Activated B cell treated with CpG ODN at 0.5 μM for 24 hours (primary cell): ENCODE measurements at regions of chr11 and their contacts with region 1.

Region 1: GRCh38 chr11:69296890-69297786 is 3.2 kb downstream of the MYEOV start:
- DNase-seq: peak; percentile 82
- ATAC-seq: peak; percentile 42
- H3K4me3 Mint-ChIP-seq: peak overlapping the region; percentile 70
- H3K27ac Mint-ChIP-seq: peak overlapping the region; percentile 96
- H3K4me1 Mint-ChIP-seq: peaks cover 79% of the 10 kb centered on the region
- H3K27me3 Mint-ChIP-seq: no peaks in the 10 kb centered on the region
- CTCF ChIP-seq: no peak

Region 2: GRCh38 chr11:69055598-69056516 is 241.3 kb before region 1 on chr11:
- CTCF ChIA-PET with region 1: no interaction called
- POLR2A ChIA-PET with region 1: interaction called, 15 read pairs
- intact Hi-C with region 1: loop called (anchors 1 kb)
- DNase-seq: peak; percentile 78
- ATAC-seq: peak; percentile 87
- H3K4me3 Mint-ChIP-seq: peak overlapping the region; percentile 69
- H3K27ac Mint-ChIP-seq: peak overlapping the region; percentile 86
- H3K4me1 Mint-ChIP-seq: peaks cover 58% of the 10 kb centered on the region
- H3K27me3 Mint-ChIP-seq: no peaks in the 10 kb centered on the region
- CTCF ChIP-seq: no peak

Region 3: GRCh38 chr11:69134943-69135342 is 162.2 kb before region 1 on chr11:
- CTCF ChIA-PET with region 1: no interaction called
- POLR2A ChIA-PET with region 1: interaction called, 10 read pairs
- intact Hi-C with region 1: no loop called
- DNase-seq: no peak
- ATAC-seq: no peak
- H3K4me3 Mint-ChIP-seq: no peak overlapping the region
- H3K27ac Mint-ChIP-seq: no peak overlapping the region
- H3K4me1 Mint-ChIP-seq: peaks cover 20% of the 10 kb centered on the region
- H3K27me3 Mint-ChIP-seq: no peaks in the 10 kb centered on the region
- CTCF ChIP-seq: no peak

Region 4: DNA sequence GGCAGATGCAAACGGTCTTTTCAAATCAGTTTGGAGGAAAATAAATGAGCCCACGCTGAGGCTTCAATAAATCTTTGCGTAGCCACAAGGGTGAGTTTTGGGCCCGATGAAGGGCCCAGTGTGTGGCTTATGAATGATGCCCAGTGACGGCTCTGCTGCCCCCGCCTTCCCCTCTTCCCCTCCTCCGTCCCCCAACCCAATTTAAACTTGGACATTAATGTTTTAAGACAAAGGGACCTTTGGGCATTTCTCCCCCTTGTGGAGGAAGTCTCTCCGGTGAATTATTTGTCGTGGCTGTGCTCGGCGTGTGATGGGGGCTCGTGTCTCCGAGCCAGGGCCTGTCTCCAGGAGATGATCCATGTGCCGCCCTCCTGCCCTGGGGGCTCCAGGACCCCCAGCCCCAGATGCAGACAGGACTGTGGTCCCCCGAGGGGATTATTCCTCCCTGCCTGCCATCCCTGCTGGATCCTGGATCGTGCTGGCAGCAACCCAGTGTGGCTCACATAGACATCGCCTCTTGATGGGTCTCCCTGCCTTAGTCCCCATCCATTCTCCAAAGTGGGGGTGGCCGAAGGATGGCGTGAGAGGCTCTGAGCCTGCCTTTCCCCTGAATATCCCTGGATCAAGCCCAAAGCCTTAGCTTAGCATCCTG is 85.1 kb before region 1 on chr11:
- CTCF ChIA-PET with region 1: no interaction called
- POLR2A ChIA-PET with region 1: no interaction called
- intact Hi-C with region 1: loop called (anchors 2 kb)
- DNase-seq: peak; percentile 10
- ATAC-seq: no peak
- H3K4me3 Mint-ChIP-seq: no peak overlapping the region
- H3K27ac Mint-ChIP-seq: peak overlapping the region; percentile 13
- H3K4me1 Mint-ChIP-seq: peaks cover 33% of the 10 kb centered on the region
- H3K27me3 Mint-ChIP-seq: peaks cover 7% of the 10 kb centered on the region
- CTCF ChIP-seq: no peak

Region 5: GRCh38 chr11:69337211-69337721 is 40.1 kb after region 1 on chr11:
- CTCF ChIA-PET with region 1: no interaction called
- POLR2A ChIA-PET with region 1: interaction called, 5 read pairs
- intact Hi-C with region 1: loop called (anchors 1 kb)
- DNase-seq: no peak
- ATAC-seq: peak; percentile 87
- H3K4me3 Mint-ChIP-seq: peak overlapping the region; percentile 12
- H3K27ac Mint-ChIP-seq: no peak overlapping the region
- H3K4me1 Mint-ChIP-seq: peaks cover 17% of the 10 kb centered on the region
- H3K27me3 Mint-ChIP-seq: no peaks in the 10 kb centered on the region
- CTCF ChIP-seq: no peak

Region 6: DNA sequence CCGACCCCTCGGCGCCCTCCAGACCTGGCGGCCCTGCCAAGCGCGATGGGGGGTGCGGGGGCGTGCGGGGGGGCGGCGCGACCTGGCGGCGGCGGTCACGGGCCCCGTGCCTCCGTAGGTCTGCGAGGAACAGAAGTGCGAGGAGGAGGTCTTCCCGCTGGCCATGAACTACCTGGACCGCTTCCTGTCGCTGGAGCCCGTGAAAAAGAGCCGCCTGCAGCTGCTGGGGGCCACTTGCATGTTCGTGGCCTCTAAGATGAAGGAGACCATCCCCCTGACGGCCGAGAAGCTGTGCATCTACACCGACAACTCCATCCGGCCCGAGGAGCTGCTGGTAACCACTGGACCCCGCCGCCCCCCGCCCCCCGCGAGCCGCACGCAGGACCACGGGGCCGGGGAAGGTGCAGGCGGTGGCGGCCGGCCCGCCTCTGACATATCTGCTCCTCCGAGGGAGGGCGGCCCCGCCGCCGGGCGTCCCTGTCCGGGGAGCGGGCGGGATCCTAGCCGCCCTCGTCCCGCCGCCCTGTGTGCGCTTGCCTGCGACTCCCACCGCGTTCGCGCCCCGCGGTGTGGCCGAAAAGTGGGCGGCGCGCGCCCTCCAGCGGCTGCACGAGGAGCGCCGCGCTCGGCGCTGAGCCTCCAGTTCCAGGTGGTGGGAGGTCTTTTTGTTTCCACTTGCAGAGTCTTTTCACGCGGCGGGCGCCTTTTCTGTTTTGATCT is 345.9 kb after region 1 on chr11:
- CTCF ChIA-PET with region 1: interaction called, 28 read pairs
- POLR2A ChIA-PET with region 1: interaction called, 27 read pairs
- intact Hi-C with region 1: loop called (anchors 1 kb)
- DNase-seq: peak; percentile 86
- ATAC-seq: peak; percentile 80
- H3K4me3 Mint-ChIP-seq: peak overlapping the region; percentile 83
- H3K27ac Mint-ChIP-seq: no peak overlapping the region
- H3K4me1 Mint-ChIP-seq: peaks cover 32% of the 10 kb centered on the region
- H3K27me3 Mint-ChIP-seq: peaks cover 11% of the 10 kb centered on the region
- CTCF ChIP-seq: peak; percentile 68

Region 7: GRCh38 chr11:70202898-70203748 is 906.0 kb after region 1 on chr11 and contains the start of gene FADD:
- CTCF ChIA-PET with region 1: no interaction called
- POLR2A ChIA-PET with region 1: no interaction called
- intact Hi-C with region 1: loop called (anchors 5 kb)
- DNase-seq: peak; percentile 83
- ATAC-seq: peak; percentile 66
- H3K4me3 Mint-ChIP-seq: peak within 1 kb of the TSS; percentile 93
- H3K27ac Mint-ChIP-seq: peak within 1 kb of the TSS; percentile 92
- H3K4me1 Mint-ChIP-seq: peaks cover 28% of the 10 kb centered on the region
- H3K27me3 Mint-ChIP-seq: no peaks in the 10 kb centered on the region
- CTCF ChIP-seq: no peak
- total RNA-seq, gene FADD: 29.5 and 31.2 TPM in 2 replicates